Pancreas (tissue), 10 donors: ENCODE measurements at regions of chr9 and their contacts with region 1.

Region 1: DNA sequence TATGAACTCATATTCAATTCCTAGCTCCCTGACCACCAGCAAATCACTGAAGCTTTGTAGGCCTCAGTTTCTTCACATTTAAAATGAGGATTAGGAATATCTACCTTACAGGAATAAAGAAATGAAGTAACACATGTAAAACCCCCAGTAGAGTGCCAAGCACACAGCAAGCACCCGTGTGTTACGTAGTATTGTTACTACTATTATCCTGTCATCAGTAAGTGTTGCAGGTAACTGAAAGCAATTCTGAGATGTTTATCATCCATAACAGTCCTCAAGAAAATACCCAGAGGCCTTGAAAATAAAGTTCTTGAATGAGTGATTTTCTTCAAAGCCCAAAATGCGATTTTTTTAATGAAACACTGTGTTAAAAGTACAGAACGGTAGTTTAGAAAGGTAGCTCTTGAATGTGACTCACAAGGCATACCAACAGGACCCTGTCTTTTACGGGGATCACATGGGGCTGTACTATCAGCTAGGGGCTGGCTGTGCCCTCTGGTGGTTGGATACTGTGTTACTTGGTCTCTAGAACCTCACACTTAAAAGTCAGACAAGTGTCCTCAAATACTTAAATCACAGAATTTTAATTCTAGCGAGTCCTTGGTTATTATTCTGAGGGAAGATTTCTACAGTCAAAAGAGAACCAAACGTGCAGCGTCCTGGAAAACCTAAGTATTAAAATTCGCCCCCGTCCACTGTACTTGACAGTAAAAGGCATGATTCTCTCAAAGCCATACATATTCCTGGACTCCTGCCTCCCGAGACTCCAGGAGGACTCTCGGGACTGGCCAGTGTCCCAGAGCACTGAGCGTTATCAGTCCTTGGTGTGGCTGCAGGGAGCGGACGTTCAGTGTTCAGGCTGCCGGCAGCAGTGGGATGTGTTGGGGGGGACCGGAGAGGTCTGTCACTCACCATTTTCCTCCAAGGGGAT is 725 bp downstream of the NDUFB6 start:
- DNase-seq: peak in 5 of 6 donors; percentile 18 to 60 (median 46)
- ATAC-seq: peak; percentile 77 to 95 (median 87)
- H3K4me3 ChIP-seq: peak overlapping the region; percentile 45 to 87 (median 78)
- H3K27ac ChIP-seq: peak overlapping the region; percentile 53 to 87 (median 84)
- H3K4me1 ChIP-seq: peaks cover 0 to 21% (median 11%) of the 10 kb centered on the region in 3 donors
- H3K27me3 ChIP-seq: no peaks in the 10 kb centered on the region
- CTCF ChIP-seq: peak; percentile 23 to 45 (median 34)

Region 2: GRCh38 chr9:32218100-32218767 is 354.0 kb before region 1 on chr9:
- intact Hi-C with region 1: no loop called
- DNase-seq: no peak
- ATAC-seq: no peak
- H3K4me3 ChIP-seq: no peak overlapping the region
- H3K27ac ChIP-seq: no peak overlapping the region
- H3K4me1 ChIP-seq: no peaks in the 10 kb centered on the region
- H3K27me3 ChIP-seq: no peaks in the 10 kb centered on the region
- CTCF ChIP-seq: no peak

Region 3: GRCh38 chr9:32442433-32442832 is 129.8 kb before region 1 on chr9:
- intact Hi-C with region 1: loop called in 2 of 3 experiments (anchors 5 to 10 kb)
- DNase-seq: no peak
- ATAC-seq: no peak
- H3K4me3 ChIP-seq: no peak overlapping the region
- H3K27ac ChIP-seq: no peak overlapping the region
- H3K4me1 ChIP-seq: no peaks in the 10 kb centered on the region
- H3K27me3 ChIP-seq: no peaks in the 10 kb centered on the region
- CTCF ChIP-seq: no peak

Region 4: GRCh38 chr9:32502464-32502863 is 69.8 kb before region 1 on chr9:
- intact Hi-C with region 1: no loop called
- DNase-seq: no peak
- ATAC-seq: no peak
- H3K4me3 ChIP-seq: no peak overlapping the region
- H3K27ac ChIP-seq: no peak overlapping the region
- H3K4me1 ChIP-seq: peaks cover 0 to under 1% (median 0%) of the 10 kb centered on the region in 3 donors
- H3K27me3 ChIP-seq: no peaks in the 10 kb centered on the region
- CTCF ChIP-seq: no peak